Activated CD8-positive, alpha-beta T cell treated with anti-CD3 and anti-CD28 coated beads for 36 hours (primary cell): ENCODE measurements at regions of chr12 and their contacts with region 1.

Region 1: DNA sequence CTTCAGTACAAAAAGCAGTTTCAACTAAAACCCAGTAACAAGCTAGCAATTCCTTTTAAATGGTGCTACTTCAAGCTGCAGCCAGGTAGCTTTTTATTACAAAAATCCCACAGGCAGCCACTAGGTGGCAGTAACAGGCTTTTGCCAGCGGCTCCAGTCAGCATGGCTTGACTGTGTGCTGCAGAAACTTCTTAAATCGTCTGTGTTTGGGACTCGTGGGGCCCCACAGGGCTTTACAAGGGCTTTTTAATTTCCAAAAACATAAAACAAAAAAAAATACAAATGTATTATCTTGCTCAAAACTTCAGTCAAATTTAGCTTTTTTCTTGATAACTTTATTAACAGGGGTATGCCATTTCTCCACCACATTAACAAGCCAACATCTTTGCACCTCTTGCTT is 3.6 kb upstream of the CLEC4E start:
- DNase-seq: peak; percentile 82
- ATAC-seq: peak; percentile 80
- H3K4me3 Mint-ChIP-seq: no peak overlapping the region
- H3K27ac Mint-ChIP-seq: no peak overlapping the region
- H3K4me1 Mint-ChIP-seq: peaks cover 9% of the 10 kb centered on the region
- H3K27me3 Mint-ChIP-seq: peaks cover 31% of the 10 kb centered on the region
- CTCF ChIP-seq: peak; percentile 94

Region 2: DNA sequence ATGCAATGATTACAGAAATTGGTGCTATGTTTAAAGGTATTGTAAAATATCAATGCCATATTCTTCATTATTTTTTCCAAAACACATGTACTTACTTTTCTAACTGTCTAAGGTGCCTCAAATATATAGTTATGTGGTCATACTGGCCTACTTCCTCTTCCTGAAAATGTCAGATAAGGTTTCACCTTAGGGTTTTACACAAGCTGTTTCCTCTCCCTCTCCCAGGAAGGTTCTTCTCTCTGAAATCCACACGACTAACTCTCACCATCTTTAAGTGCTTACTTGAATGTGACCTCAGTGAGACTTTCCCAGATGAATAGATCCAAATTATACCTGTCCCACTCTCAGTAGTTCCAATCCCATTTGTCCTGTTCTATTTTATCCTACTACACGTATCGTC is 42.6 kb before region 1 on chr12:
- CTCF ChIA-PET with region 1: interaction called, 15 read pairs
- POLR2A ChIA-PET with region 1: no interaction called
- intact Hi-C with region 1: no loop called
- DNase-seq: no peak
- ATAC-seq: no peak
- H3K4me3 Mint-ChIP-seq: no peak overlapping the region
- H3K27ac Mint-ChIP-seq: no peak overlapping the region
- H3K4me1 Mint-ChIP-seq: peaks cover 4% of the 10 kb centered on the region
- H3K27me3 Mint-ChIP-seq: peaks cover 7% of the 10 kb centered on the region
- CTCF ChIP-seq: no peak

Region 3: DNA sequence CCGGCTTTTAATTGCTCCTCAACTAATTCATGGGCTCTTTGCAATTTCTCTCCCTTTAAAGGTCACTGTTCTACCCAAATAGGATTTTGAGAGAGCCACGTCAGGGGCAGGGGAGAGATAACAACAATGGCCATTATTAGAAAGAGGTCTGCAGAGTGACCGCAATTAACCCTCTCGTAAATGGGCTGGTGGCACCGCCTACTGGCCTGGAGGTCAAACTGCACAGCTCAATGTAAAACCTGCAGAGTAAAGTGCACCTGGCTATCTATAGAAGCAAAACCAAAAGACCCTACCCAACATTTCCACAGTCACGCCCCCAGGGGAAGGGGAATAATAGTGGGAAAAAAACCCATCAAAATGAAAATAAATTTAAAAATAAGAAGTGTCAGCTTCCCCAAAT is 18.0 kb after region 1 on chr12:
- CTCF ChIA-PET with region 1: interaction called, 25 read pairs
- POLR2A ChIA-PET with region 1: no interaction called
- intact Hi-C with region 1: no loop called
- DNase-seq: no peak
- ATAC-seq: no peak
- H3K4me3 Mint-ChIP-seq: no peak overlapping the region
- H3K27ac Mint-ChIP-seq: no peak overlapping the region
- H3K4me1 Mint-ChIP-seq: no peaks in the 10 kb centered on the region
- H3K27me3 Mint-ChIP-seq: no peaks in the 10 kb centered on the region
- CTCF ChIP-seq: no peak

Region 4: GRCh38 chr12:8609061-8609570 is 64.8 kb after region 1 on chr12:
- CTCF ChIA-PET with region 1: interaction called, 34 read pairs
- POLR2A ChIA-PET with region 1: no interaction called
- intact Hi-C with region 1: no loop called
- DNase-seq: peak; percentile 16
- ATAC-seq: peak; percentile 61
- H3K4me3 Mint-ChIP-seq: no peak overlapping the region
- H3K27ac Mint-ChIP-seq: no peak overlapping the region
- H3K4me1 Mint-ChIP-seq: peaks cover 10% of the 10 kb centered on the region
- H3K27me3 Mint-ChIP-seq: peaks cover 2% of the 10 kb centered on the region
- CTCF ChIP-seq: peak; percentile 75

Region 5: GRCh38 chr12:8702159-8702558 is 157.9 kb after region 1 on chr12:
- CTCF ChIA-PET with region 1: no interaction called
- POLR2A ChIA-PET with region 1: no interaction called
- intact Hi-C with region 1: no loop called
- DNase-seq: no peak
- ATAC-seq: no peak
- H3K4me3 Mint-ChIP-seq: no peak overlapping the region
- H3K27ac Mint-ChIP-seq: no peak overlapping the region
- H3K4me1 Mint-ChIP-seq: peaks cover 19% of the 10 kb centered on the region
- H3K27me3 Mint-ChIP-seq: no peaks in the 10 kb centered on the region
- CTCF ChIP-seq: no peak

Region 6: DNA sequence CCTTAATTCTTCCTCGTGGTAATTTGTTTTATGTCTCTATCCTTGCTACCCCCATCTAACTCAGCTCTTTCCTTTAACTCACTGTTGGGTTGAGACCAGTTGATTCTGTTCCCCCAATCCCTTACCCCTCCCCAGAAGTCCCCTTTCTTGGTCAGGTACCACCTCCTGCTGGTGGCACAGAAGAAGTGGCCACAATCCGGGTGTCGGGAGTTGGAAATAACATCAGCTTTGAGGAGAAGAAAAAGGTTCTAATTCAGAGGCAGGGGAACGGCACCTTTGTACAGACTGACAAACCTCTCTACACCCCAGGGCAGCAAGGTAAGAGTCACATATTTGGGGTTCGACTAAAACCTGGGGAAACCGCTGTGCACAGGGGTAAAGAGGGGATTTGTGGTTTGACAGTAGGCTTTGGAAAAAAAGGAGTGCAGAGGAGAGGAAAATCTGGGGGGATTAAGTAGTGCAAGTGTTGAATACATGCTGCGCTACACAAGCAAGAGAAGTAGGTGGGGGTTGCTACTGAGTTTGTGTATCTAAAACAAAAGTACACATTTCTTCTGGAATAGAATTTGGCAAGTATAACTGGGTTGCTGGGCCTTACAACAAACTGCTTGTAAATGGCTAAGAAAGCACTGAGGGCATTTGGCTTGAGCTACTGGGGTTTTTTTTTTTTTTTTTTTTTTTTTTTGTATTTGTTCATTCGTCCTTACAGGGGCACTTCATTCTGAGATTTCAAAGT is 279.4 kb after region 1 on chr12:
- CTCF ChIA-PET with region 1: interaction called, 11 read pairs
- POLR2A ChIA-PET with region 1: no interaction called
- intact Hi-C with region 1: no loop called
- DNase-seq: peak; percentile 3
- ATAC-seq: no peak
- H3K4me3 Mint-ChIP-seq: no peak overlapping the region
- H3K27ac Mint-ChIP-seq: no peak overlapping the region
- H3K4me1 Mint-ChIP-seq: peaks cover 4% of the 10 kb centered on the region
- H3K27me3 Mint-ChIP-seq: peaks cover 2% of the 10 kb centered on the region
- CTCF ChIP-seq: no peak

Region 7: GRCh38 chr12:9049520-9050133 is 505.3 kb after region 1 on chr12:
- CTCF ChIA-PET with region 1: interaction called, 11 read pairs
- POLR2A ChIA-PET with region 1: no interaction called
- intact Hi-C with region 1: no loop called
- DNase-seq: peak; percentile 27
- ATAC-seq: peak; percentile 75
- H3K4me3 Mint-ChIP-seq: no peak overlapping the region
- H3K27ac Mint-ChIP-seq: no peak overlapping the region
- H3K4me1 Mint-ChIP-seq: peaks cover 13% of the 10 kb centered on the region
- H3K27me3 Mint-ChIP-seq: no peaks in the 10 kb centered on the region
- CTCF ChIP-seq: peak; percentile 80